ENCODE measurements at regions of chr11 and their contacts with region 1.

Region 1: GRCh38 chr11:14636119-14636518 is 7.5 kb upstream of the PDE3B start:
- DNase-seq: peak in 1 of 5 donors; percentile 23
- H3K4me3 ChIP-seq: no peak overlapping the region
- H3K4me3 Mint-ChIP-seq: peak overlapping the region in 7 of 8 donors; percentile 13 to 71 (median 44)
- H3K27ac ChIP-seq: no peak overlapping the region
- H3K27ac Mint-ChIP-seq: peak overlapping the region; percentile 37 to 92 (median 80)
- H3K4me1 ChIP-seq: peaks cover 68% of the 10 kb centered on the region
- H3K4me1 Mint-ChIP-seq: peaks cover 51 to 76% (median 57%) of the 10 kb centered on the region in 4 donors
- H3K27me3 ChIP-seq: no peaks in the 10 kb centered on the region
- H3K27me3 Mint-ChIP-seq: no peaks in the 10 kb centered on the region

Region 2: GRCh38 chr11:14625586-14626205 is 10.4 kb before region 1 on chr11:
- CTCF ChIA-PET with region 1: interaction called, 10 read pairs
- POLR2A ChIA-PET with region 1: interaction called, 5 read pairs
- intact Hi-C with region 1: no loop called
- DNase-seq: no peak
- H3K4me3 ChIP-seq: no peak overlapping the region
- H3K4me3 Mint-ChIP-seq: peak overlapping the region in 4 of 8 donors; percentile 40 to 59 (median 52)
- H3K27ac ChIP-seq: no peak overlapping the region
- H3K27ac Mint-ChIP-seq: peak overlapping the region in 4 of 7 donors; percentile 11 to 62 (median 51)
- H3K4me1 ChIP-seq: peaks cover 33% of the 10 kb centered on the region
- H3K4me1 Mint-ChIP-seq: peaks cover 34 to 64% (median 49%) of the 10 kb centered on the region in 4 donors
- H3K27me3 ChIP-seq: no peaks in the 10 kb centered on the region
- H3K27me3 Mint-ChIP-seq: no peaks in the 10 kb centered on the region

Region 3: GRCh38 chr11:16012125-16012751 is 1376.1 kb after region 1 on chr11:
- CTCF ChIA-PET with region 1: no interaction called
- POLR2A ChIA-PET with region 1: no interaction called
- intact Hi-C with region 1: no loop called
- DNase-seq: no peak
- H3K4me3 ChIP-seq: no peak overlapping the region
- H3K4me3 Mint-ChIP-seq: no peak overlapping the region
- H3K27ac ChIP-seq: no peak overlapping the region
- H3K27ac Mint-ChIP-seq: no peak overlapping the region
- H3K4me1 ChIP-seq: no peaks in the 10 kb centered on the region
- H3K4me1 Mint-ChIP-seq: no peaks in the 10 kb centered on the region
- H3K27me3 ChIP-seq: no peaks in the 10 kb centered on the region
- H3K27me3 Mint-ChIP-seq: no peaks in the 10 kb centered on the region

Measured in CD4-positive, alpha-beta memory T cell (primary cell).